Psoas muscle (tissue), 8 donors: ENCODE measurements at regions of chr11 and their contacts with region 1.

Region 1: DNA sequence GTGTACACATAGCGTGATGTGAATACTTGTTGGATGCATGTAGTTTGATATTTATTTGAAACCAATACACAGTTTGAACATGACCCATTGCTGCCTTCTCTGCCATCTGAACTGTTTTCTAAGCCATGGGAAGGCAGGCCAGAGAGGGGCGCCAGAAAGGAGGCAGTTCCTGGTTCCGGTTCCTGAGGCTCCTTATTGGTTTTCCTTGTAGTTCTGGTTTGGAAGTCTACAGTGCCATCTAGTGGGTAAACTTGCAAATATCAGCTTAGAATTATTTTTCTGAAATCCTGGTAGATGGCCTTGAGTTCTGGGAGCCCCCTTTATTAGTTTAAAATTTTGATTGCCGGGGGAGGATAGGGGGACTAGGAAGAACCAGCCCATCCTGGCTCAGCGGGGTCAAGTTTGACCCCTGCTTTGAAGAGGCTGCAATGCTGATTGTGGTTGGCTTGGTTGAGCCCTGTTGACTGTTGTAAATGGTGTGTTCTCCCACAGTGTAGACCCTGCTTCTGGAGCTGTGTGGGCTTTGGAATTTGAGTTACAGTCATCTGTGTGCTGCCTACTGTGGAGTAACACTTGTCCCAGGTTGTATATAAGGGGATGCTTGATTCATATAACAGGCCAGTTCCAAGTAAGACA is 48.4 kb downstream of the GRAMD1B start:
- DNase-seq: peak; percentile 30 to 67
- ATAC-seq: peak; percentile 61 to 87 (median 74)
- H3K4me3 ChIP-seq: no peak overlapping the region
- H3K27ac ChIP-seq: no peak overlapping the region
- H3K4me1 ChIP-seq: peaks cover 21% of the 10 kb centered on the region
- H3K27me3 ChIP-seq: no peaks in the 10 kb centered on the region
- CTCF ChIP-seq: peak; percentile 75

Region 2: GRCh38 chr11:123110356-123110755 is 368.1 kb before region 1 on chr11:
- intact Hi-C with region 1: loop called in 1 of 2 experiments (anchors 5 kb)
- DNase-seq: no peak
- ATAC-seq: no peak
- H3K4me3 ChIP-seq: no peak overlapping the region
- H3K27ac ChIP-seq: no peak overlapping the region
- H3K4me1 ChIP-seq: peaks cover 3% of the 10 kb centered on the region
- H3K27me3 ChIP-seq: no peaks in the 10 kb centered on the region
- CTCF ChIP-seq: no peak

Region 3: DNA sequence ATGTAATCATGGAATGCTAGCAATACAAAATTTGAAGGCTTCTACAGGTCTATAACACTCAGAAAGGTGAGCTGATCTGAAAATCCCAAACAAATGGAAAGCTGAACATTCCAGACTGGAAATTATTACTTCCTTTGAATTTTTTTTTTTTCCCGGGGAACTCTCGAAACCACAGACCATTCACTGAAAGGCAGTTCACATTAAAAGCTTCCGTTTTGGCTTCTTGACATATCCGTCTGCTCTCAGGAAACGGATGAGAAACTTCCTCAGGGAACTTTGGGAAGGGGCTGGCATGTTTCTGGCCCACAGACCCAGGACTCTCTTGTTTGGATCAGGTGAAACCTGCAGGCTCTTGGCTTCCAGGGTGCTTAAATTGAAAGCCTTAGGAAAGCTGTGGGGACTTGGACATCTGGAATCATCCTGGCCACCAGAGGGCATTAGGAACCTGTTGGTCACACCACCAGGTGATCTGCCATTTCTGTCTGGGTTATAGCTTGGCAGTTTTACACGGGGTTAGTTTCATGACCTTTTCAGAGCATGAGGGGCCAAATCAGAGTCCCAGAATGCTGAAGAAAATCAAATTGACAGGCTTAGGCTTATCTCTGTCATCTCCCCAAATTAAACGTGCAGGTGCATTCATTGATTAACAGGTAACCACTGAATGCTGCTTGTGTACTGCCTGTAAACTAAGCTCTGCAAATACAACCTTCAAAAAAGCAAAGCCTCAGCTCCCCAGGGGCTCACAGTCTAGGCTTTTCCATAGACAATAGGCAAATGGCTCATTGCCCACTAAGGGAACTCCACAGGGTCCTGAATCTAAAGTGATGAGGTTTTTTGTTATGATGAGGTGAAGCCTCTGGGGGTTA is 71.1 kb before region 1 on chr11:
- intact Hi-C with region 1: loop called (anchors 1 to 2 kb)
- DNase-seq: peak; percentile 34 to 59
- ATAC-seq: peak; percentile 87 to 93 (median 89)
- H3K4me3 ChIP-seq: no peak overlapping the region
- H3K27ac ChIP-seq: no peak overlapping the region
- H3K4me1 ChIP-seq: no peaks in the 10 kb centered on the region
- H3K27me3 ChIP-seq: no peaks in the 10 kb centered on the region
- CTCF ChIP-seq: peak; percentile 75

Region 4: DNA sequence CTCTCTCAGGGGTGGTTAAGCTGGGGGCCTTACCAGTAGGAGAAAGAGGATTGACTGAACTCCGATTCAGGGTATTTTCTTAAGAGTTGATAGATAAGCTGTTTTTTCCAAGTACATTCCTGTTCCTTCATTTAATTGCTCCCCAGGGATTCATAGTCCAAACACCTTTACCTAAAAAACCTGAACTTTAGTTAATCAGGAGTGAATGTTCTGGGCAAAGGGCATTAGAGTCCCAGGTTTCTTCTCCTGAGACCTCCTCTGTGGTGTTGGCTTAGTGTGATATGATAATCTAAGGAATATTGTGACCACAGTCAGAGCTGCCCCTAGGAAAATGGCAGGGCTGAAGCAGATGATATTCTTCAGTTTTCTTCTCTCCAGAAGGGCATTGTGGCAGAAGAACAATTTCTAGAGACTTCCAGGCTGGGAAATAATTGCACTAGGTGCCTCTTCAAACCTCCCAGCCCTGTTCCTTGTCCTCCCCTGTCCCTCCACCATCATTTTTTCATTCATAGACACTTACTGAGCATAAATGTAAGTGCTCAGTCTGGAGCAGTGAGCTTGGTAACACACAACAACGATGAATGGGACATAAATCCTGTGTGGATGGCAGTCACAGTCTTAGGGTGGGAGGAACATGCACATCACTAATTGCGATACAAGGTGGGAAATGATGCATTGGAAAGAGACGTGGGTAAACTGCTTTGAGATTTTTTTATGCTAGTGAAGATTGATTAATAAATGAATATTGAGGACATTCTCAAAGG is 59.9 kb before region 1 on chr11:
- intact Hi-C with region 1: no loop called
- DNase-seq: no peak
- ATAC-seq: no peak
- H3K4me3 ChIP-seq: no peak overlapping the region
- H3K27ac ChIP-seq: no peak overlapping the region
- H3K4me1 ChIP-seq: no peaks in the 10 kb centered on the region
- H3K27me3 ChIP-seq: no peaks in the 10 kb centered on the region
- CTCF ChIP-seq: no peak

Region 5: DNA sequence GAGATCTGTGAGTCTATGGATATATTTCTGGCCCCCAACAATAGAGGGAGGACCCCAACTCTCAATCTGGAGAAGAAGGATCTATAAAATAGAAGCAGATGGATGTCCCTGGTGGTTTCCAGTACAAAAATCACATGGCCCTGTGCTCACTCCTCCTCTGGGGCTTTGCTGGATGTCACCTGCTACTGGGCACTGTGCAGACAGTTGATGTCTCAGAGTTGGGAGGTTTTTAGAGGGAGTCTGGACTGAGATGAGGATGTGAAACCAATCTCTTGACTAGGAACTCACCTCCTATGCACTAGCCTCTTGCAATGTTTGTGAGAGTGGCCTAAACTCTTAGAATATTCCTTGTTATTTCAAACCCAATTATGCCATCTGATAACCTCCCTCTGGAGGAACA is 68.7 kb after region 1 on chr11:
- intact Hi-C with region 1: no loop called
- DNase-seq: no peak
- ATAC-seq: peak in 1 of 4 donors; percentile 25
- H3K4me3 ChIP-seq: no peak overlapping the region
- H3K27ac ChIP-seq: no peak overlapping the region
- H3K4me1 ChIP-seq: no peaks in the 10 kb centered on the region
- H3K27me3 ChIP-seq: peaks cover 0 to 2% (median 0%) of the 10 kb centered on the region in 3 donors
- CTCF ChIP-seq: no peak